ENCODE measurements at regions of chr4 and their contacts with region 1.

Region 1: DNA sequence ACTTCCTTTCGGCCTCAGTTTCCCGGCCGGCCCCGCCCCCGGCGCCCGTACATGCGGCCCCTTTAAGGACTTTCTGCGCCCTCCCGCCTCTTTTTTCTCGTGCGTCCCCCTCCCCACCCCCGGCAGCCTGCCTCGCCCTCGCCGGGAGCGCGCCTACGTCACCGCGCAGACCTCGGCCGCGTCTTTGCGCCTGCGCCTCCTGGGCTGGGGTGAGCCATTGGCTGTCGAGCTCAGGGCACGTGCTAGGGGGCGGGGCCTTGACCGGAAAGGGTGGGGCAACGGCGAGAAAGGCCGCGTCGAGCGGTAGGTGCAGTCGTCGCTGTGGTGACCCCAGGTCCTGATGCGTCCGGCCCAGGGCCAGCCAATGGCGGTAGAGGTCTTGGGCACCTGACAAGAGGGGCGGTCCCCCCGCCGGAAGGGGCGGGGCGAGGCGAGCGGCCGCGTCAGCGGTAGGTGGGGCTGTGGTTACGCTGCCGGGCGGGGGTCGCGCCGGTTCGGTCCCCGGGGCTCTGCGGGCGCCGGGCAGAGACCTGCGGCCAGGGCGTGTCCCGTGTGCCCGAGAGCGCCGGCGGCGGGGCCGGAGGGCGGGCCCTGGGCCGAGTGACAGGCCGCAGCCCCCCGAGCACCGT is at the start of gene UVSSA:
- DNase-seq: peak; percentile 100
- ATAC-seq: peak; percentile 91
- H3K4me3 Mint-ChIP-seq: peak within 1 kb of the TSS; percentile 90
- H3K27ac Mint-ChIP-seq: peak within 1 kb of the TSS; percentile 84
- H3K4me1 Mint-ChIP-seq: peaks cover 33% of the 10 kb centered on the region
- H3K27me3 Mint-ChIP-seq: no peaks in the 10 kb centered on the region
- CTCF ChIP-seq: no peak
- total RNA-seq, gene UVSSA: 31.7 and 35.2 TPM in 2 replicates

Region 2: DNA sequence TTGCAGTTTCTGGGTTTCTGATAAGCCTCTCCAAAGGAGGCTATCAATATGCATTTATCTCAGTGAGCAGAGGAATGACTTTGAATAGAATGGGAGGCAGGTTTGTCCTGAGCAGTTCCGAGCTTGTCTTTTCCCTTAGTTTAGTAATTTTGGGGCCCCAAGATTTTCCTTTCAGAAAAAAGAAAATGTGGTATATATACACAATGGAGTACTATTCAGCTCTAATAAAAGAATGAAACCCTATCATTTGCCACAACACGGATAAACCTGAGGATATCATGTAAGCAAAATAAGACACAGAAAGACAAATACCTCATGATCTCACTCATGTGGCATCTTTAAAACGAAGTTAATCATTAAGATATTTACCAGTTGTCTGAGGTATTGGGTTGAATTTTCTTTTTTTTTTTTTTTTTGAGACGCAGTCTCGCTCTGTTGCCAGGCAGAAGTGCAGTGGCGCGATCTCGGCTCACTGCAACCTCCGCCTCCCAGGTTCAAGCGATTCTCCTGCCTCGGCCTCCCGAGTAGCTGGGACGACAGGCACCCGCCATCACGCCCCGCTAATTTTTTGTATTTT is 848.5 kb before region 1 on chr4:
- CTCF ChIA-PET with region 1: no interaction called
- POLR2A ChIA-PET with region 1: no interaction called
- intact Hi-C with region 1: loop called (anchors 5 kb)
- DNase-seq: no peak
- ATAC-seq: peak; percentile 25
- H3K4me3 Mint-ChIP-seq: peak overlapping the region; percentile 93
- H3K27ac Mint-ChIP-seq: peak overlapping the region; percentile 95
- H3K4me1 Mint-ChIP-seq: peaks cover 32% of the 10 kb centered on the region
- H3K27me3 Mint-ChIP-seq: no peaks in the 10 kb centered on the region
- CTCF ChIP-seq: no peak

Region 3: GRCh38 chr4:1130316-1131186 is 216.3 kb before region 1 on chr4:
- CTCF ChIA-PET with region 1: interaction called, 13 read pairs
- POLR2A ChIA-PET with region 1: interaction called, 5 read pairs
- intact Hi-C with region 1: loop called (anchors 1 kb)
- DNase-seq: peak; percentile 63
- ATAC-seq: peak; percentile 99
- H3K4me3 Mint-ChIP-seq: no peak overlapping the region
- H3K27ac Mint-ChIP-seq: peak overlapping the region; percentile 19
- H3K4me1 Mint-ChIP-seq: peaks cover 21% of the 10 kb centered on the region
- H3K27me3 Mint-ChIP-seq: peaks cover 2% of the 10 kb centered on the region
- CTCF ChIP-seq: peak; percentile 99

Region 4: DNA sequence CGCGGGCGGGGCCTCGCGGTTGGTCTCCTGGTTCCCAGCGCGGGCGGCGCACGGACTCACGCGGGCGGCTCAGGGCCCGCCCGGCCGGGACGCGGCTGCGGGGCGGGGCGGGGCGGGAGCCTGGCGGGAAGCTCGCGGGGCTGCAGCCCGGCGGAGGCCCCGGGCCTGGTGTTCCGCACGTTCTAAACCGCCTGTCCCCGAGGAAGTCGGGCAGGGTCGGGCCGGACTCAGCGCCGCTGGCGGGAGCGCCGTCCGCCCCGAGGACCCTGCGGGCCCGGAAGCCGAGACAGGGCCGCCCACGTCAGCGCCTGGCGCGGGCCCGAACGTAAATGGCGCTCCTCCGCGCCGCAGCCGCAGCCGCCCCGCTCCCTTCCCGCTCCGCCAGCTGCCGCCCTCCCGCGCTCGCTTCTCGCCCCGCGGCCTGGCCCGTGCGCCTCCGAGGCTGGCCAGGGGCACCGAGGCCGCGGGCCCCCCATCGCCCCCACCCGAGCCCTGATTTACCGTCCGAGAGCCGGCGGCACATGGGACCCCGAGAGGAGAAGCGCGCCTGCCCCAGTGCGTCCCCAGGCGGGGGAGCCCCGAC is 97.7 kb before region 1 on chr4:
- CTCF ChIA-PET with region 1: interaction called, 3 read pairs
- POLR2A ChIA-PET with region 1: interaction called, 82 read pairs
- intact Hi-C with region 1: no loop called
- DNase-seq: peak; percentile 87
- ATAC-seq: peak; percentile 70
- H3K4me3 Mint-ChIP-seq: peak overlapping the region; percentile 88
- H3K27ac Mint-ChIP-seq: peak overlapping the region; percentile 93
- H3K4me1 Mint-ChIP-seq: peaks cover 59% of the 10 kb centered on the region
- H3K27me3 Mint-ChIP-seq: no peaks in the 10 kb centered on the region
- CTCF ChIP-seq: no peak

Region 5: GRCh38 chr4:1309261-1310010 is 37.5 kb before region 1 on chr4:
- CTCF ChIA-PET with region 1: interaction called, 4 read pairs
- POLR2A ChIA-PET with region 1: no interaction called
- intact Hi-C with region 1: loop called (anchors 5 kb)
- DNase-seq: peak; percentile 29
- ATAC-seq: peak; percentile 86
- H3K4me3 Mint-ChIP-seq: peak overlapping the region; percentile 73
- H3K27ac Mint-ChIP-seq: no peak overlapping the region
- H3K4me1 Mint-ChIP-seq: peaks cover 51% of the 10 kb centered on the region
- H3K27me3 Mint-ChIP-seq: no peaks in the 10 kb centered on the region
- CTCF ChIP-seq: no peak

Measured in activated B cell treated with CpG ODN at 0.5 μM for 24 hours (primary cell).